ENCODE measurements at regions of chr19 and their contacts with region 1.

Region 1: GRCh38 chr19:44570984-44571684 is 41.7 kb upstream of the CEACAM20 start:
- DNase-seq: peak; percentile 82
- H3K4me3 ChIP-seq: no peak overlapping the region
- H3K27ac ChIP-seq: no peak overlapping the region
- H3K4me1 ChIP-seq: no peaks in the 10 kb centered on the region
- H3K27me3 ChIP-seq: peaks cover 7 to 18% of the 10 kb centered on the region in 2 experiments
- CTCF ChIP-seq: peak; percentile 71 to 82
- POLR2A ChIP-seq: no peak

Region 2: DNA sequence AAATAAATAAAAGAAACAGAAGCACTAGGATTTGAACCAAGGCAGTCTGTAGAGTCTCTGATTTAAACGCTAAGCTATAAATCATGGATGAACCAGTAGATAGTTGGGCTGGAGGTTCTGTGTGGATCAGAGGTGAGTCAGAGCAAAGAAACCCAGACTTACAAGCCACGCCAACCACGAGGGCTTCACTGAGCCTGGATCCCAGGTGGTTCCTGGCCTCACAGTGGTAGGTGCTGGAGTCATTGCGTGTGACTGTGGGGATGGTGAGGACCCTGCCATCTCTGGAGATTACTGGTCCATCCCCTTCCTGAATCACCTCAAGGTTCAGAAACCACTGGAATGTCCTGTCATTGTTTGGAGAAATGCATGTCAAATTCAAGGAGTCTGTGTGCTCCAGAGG is 22.4 kb before region 1 on chr19:
- CTCF ChIA-PET with region 1: interaction called, 15 read pairs
- POLR2A ChIA-PET with region 1: no interaction called
- dilution Hi-C with region 1: no loop called
- intact Hi-C with region 1: no loop called
- DNase-seq: no peak
- H3K4me3 ChIP-seq: no peak overlapping the region
- H3K27ac ChIP-seq: no peak overlapping the region
- H3K4me1 ChIP-seq: no peaks in the 10 kb centered on the region
- H3K27me3 ChIP-seq: peaks cover 0 to 2% of the 10 kb centered on the region in 2 experiments
- CTCF ChIP-seq: no peak
- POLR2A ChIP-seq: no peak

Region 3: DNA sequence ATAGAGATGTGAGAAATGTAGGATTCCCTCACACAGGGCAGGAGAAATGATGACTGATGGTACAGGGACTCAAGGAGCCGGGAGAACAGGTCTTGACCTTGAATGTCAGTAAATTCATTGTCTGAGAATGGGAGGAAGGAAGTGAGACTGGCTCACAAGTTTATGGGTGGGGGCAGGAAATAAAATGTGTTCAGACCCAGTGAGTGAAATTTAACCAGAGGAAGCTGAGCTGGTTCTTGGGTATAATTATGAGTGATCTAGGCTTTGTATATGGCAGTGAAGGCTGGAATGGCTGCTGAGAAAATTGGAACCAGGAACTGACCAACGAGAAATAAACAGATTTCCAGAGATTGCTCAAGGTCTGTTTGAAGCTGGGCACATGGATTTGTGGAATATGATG is 35.9 kb after region 1 on chr19:
- CTCF ChIA-PET with region 1: interaction called, 21 read pairs
- POLR2A ChIA-PET with region 1: no interaction called
- dilution Hi-C with region 1: no loop called
- intact Hi-C with region 1: no loop called
- DNase-seq: peak; percentile 95
- H3K4me3 ChIP-seq: no peak overlapping the region
- H3K27ac ChIP-seq: peak overlapping the region; percentile 93
- H3K4me1 ChIP-seq: peaks cover 62% of the 10 kb centered on the region
- H3K27me3 ChIP-seq: no peaks in the 10 kb centered on the region
- CTCF ChIP-seq: no peak
- POLR2A ChIP-seq: peak; percentile 63

Region 4: DNA sequence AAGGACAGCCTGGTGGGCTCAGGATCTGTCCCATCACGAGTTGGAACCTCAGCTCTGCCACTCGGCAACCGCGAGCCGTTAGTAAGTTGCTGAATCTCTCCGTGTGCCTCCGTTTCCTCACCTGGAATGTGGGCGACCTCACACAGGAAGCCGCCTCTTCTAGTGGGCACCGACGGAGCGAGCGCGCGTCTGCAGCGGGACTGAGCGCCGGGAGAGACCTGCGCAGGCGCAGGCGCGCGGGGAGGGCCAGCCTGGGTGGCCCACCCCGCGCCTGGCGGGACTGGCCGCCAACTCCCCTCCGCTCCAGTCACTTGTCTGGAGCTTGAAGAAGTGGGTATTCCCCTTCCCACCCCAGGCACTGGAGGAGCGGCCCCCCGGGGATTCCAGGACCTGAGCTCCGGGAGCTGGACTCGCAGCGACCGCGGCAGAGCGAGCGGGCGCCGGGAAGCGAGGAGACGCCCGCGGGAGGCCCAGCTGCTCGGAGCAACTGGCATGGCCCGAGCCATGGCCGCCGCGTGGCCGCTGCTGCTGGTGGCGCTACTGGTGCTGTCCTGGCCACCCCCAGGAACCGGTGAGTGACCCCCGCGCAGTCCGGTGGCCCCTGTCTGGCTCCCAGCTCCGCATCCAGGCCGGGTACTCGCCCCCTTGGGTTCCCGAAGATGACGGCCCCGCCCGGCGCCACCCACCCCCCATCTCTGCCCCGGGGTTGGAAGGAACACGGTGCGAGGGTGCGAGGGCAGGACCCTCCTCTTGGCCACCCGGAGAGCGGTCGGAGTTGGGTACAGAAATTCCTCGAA is 72.7 kb after region 1 on chr19 and contains the start of gene PVR:
- CTCF ChIA-PET with region 1: interaction called, 34 read pairs
- POLR2A ChIA-PET with region 1: interaction called, 3 read pairs
- dilution Hi-C with region 1: no loop called
- intact Hi-C with region 1: no loop called
- DNase-seq: peak; percentile 83
- H3K4me3 ChIP-seq: peak within 1 kb of the TSS; percentile 83 to 89 (median 85)
- H3K27ac ChIP-seq: peak within 1 kb of the TSS; percentile 89
- H3K4me1 ChIP-seq: peaks cover 41% of the 10 kb centered on the region
- H3K27me3 ChIP-seq: no peaks in the 10 kb centered on the region
- CTCF ChIP-seq: peak in 1 of 2 donors; percentile 10
- POLR2A ChIP-seq: peak; percentile 86
- total RNA-seq, gene PVR: 133 and 199 TPM in 2 replicates

Region 5: DNA sequence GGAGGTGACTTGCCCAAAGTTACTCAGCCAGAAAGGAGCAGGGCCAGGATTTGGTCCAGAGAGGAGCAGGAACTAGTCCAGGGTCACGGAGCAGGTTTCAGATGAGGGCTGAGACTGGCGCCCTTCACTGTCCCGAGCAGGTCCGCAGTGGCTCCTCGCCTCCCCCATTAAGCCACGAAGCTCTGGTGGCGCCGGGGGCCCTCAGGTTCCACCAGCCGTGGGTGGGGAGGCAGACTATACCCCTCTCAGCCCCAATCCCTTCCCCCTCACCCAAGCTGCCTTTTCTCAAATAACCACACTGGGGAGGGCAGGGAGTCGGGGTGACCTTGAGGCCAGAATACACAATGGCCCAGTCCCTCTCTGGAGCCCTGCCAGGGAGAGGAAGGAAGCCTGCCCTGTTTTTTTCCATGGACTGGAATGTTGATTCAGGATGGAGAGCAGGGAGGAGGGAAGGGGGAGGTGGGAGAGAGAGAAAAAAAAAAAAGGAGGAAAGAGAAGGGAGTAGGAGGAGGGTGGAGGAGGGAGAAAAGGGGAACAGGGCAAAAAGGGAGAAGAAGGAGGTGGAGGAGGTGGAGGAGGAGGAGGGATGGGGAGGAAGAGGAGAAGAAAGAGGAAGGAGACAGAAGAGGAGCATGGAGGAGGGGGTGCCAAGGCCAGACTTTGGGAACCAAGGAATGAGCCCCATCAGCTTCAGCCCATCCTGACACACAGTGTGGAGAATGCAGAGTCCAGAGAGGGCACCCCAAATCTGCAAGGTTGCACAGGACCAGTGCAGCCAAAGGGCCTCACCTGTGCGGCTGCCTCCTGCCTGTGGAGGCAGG is 147.5 kb after region 1 on chr19:
- CTCF ChIA-PET with region 1: interaction called, 57 read pairs
- POLR2A ChIA-PET with region 1: no interaction called
- dilution Hi-C with region 1: no loop called
- intact Hi-C with region 1: no loop called
- DNase-seq: peak; percentile 98
- H3K4me3 ChIP-seq: peak overlapping the region; percentile 11 to 72 (median 26)
- H3K27ac ChIP-seq: peak overlapping the region; percentile 100
- H3K4me1 ChIP-seq: peaks cover 38% of the 10 kb centered on the region
- H3K27me3 ChIP-seq: no peaks in the 10 kb centered on the region
- CTCF ChIP-seq: no peak
- POLR2A ChIP-seq: no peak

Region 6: DNA sequence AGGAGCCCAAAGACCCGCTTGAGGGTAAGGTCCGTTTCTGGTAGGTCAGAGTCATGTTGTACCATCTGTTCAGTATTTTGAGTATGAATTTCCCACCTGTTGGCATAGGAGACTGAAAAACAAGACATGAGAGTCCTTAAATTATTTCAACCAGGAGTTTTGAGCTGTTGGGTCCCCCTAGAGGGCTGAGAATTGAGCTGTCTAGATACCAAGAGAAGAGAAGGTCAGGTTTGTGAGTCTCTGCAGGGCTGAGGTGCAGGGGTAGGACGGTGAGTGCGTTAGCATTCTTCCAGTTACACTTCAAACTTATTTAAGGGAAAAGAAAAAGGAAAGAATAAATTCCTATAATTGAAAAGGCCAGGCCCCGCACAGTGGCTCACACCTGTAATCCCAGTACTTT is 211.6 kb after region 1 on chr19:
- CTCF ChIA-PET with region 1: interaction called, 21 read pairs
- POLR2A ChIA-PET with region 1: no interaction called
- dilution Hi-C with region 1: no loop called
- intact Hi-C with region 1: no loop called
- DNase-seq: no peak
- H3K4me3 ChIP-seq: no peak overlapping the region
- H3K27ac ChIP-seq: no peak overlapping the region
- H3K4me1 ChIP-seq: no peaks in the 10 kb centered on the region
- H3K27me3 ChIP-seq: no peaks in the 10 kb centered on the region
- CTCF ChIP-seq: no peak
- POLR2A ChIP-seq: no peak